Left colon (tissue), 2 donors: ENCODE measurements at regions of chrX and their contacts with region 1.

Region 1: GRCh38 chrX:65745992-65746391 is 78.5 kb downstream of the MSN start:
- DNase-seq: peak in 1 of 2 donors; percentile 19
- ATAC-seq: peak; percentile 42

Region 2: GRCh38 chrX:65148232-65148631 is 597.8 kb before region 1 on chrX:
- intact Hi-C with region 1: no loop called
- DNase-seq: no peak
- ATAC-seq: no peak

Region 3: GRCh38 chrX:65630771-65631170 is 115.2 kb before region 1 on chrX:
- intact Hi-C with region 1: no loop called
- DNase-seq: no peak
- ATAC-seq: no peak

Region 4: DNA sequence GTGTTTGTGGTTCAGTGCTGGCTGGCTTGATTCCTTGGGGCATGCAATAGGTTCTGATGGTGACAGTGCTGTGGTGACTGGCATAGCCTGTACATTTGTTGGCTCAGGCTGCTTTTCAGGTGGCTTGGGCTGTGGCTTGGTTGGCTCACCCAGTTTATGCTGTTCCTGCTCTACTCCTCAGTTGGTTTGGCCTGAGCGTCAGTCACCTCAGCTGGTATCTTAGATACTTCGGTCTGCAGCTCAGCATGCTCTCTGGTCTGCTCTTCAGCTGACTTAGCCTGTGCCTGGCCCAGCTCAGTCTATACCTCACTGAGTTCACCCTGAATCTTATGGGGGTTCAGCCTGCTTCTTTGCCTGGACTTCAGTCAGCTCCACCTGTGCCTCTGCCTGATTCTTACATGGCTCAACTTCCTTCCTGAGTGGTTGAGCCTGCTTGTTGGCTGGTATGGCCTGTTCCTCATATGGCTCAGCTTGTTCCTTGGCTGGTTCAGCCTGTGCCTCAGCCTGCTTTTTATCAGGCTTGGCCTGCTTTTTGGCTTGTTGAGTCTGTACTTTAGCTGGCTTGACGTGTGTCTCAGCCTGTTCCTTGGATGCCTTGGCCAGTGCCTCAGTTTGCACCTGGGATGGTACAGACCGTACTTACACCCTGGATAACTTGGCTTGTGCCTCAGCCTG is 92.0 kb after region 1 on chrX:
- intact Hi-C with region 1: no loop called
- DNase-seq: no peak
- ATAC-seq: no peak

Region 5: GRCh38 chrX:65985922-65986588 is 240.1 kb after region 1 on chrX:
- intact Hi-C with region 1: loop called in 1 of 2 experiments (anchors 5 kb)
- DNase-seq: no peak
- ATAC-seq: peak; percentile 94

Region 6: GRCh38 chrX:66074920-66075879 is 329.2 kb after region 1 on chrX:
- intact Hi-C with region 1: no loop called
- DNase-seq: peak; percentile 20 to 38
- ATAC-seq: no peak